ENCODE measurements at regions of chr1 and their contacts with region 1.

Region 1: DNA sequence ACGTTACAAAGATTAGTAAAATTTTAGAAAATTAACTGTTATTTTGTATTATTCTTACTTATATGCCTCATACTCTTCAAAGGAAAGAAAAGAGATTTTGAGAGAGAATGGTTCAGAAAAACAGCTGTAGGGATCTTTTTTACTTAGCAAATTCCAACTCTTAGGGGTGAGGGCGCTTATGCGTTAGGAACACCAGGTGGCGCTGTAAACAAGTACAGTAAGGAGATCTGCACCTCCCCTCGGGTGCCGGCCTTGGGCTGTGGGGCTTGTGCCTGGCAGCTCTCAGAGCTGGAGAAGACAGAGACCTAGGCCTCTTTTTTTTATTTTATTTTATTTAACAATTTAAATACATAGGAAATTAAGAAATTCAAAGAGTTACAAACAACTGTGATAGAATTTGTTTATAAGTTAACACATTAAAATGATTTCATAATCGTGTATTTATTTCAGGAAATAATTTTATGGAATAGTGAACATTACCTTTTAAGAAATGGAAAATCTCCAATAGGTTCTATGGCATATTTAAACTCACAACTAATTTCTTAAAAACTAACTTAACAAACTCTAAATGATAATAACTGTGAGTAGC is 32.6 kb downstream of the UTP25 start:
- DNase-seq: peak; percentile 95
- H3K4me3 ChIP-seq: no peak overlapping the region
- H3K27ac ChIP-seq: no peak overlapping the region
- H3K4me1 ChIP-seq: no peaks in the 10 kb centered on the region
- H3K27me3 ChIP-seq: peaks cover 0 to 13% (median 0%) of the 10 kb centered on the region in 4 donors
- CTCF ChIP-seq: peak; percentile 71 to 89 (median 88)
- EP300 ChIP-seq: no peak
- POLR2A ChIP-seq: no peak

Region 2: DNA sequence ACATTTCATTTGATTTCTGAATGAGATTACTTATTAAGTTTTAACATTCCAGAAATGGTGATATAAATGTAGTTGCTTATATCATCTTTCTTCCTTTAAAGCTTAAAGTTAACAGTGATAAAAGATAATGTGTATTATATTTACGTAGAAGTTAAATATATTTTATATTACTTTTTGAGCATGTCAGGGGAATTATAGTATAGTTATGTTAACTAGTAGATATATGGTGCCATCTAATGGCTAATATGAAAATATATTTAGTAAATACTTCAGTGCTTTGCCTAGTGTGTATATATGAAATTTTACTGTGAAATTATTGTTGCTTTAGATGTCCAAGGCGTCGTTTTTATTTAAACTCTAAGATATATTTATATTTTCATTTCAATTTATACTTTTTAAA is 129.1 kb after region 1 on chr1:
- intact Hi-C with region 1: loop called (anchors 5 kb)
- DNase-seq: no peak
- H3K4me3 ChIP-seq: no peak overlapping the region
- H3K27ac ChIP-seq: no peak overlapping the region
- H3K4me1 ChIP-seq: no peaks in the 10 kb centered on the region
- H3K27me3 ChIP-seq: peaks cover 0 to 24% (median 0%) of the 10 kb centered on the region in 4 donors
- CTCF ChIP-seq: peak in 2 of 3 experiments; percentile 19 to 30
- EP300 ChIP-seq: no peak
- POLR2A ChIP-seq: no peak

Region 3: DNA sequence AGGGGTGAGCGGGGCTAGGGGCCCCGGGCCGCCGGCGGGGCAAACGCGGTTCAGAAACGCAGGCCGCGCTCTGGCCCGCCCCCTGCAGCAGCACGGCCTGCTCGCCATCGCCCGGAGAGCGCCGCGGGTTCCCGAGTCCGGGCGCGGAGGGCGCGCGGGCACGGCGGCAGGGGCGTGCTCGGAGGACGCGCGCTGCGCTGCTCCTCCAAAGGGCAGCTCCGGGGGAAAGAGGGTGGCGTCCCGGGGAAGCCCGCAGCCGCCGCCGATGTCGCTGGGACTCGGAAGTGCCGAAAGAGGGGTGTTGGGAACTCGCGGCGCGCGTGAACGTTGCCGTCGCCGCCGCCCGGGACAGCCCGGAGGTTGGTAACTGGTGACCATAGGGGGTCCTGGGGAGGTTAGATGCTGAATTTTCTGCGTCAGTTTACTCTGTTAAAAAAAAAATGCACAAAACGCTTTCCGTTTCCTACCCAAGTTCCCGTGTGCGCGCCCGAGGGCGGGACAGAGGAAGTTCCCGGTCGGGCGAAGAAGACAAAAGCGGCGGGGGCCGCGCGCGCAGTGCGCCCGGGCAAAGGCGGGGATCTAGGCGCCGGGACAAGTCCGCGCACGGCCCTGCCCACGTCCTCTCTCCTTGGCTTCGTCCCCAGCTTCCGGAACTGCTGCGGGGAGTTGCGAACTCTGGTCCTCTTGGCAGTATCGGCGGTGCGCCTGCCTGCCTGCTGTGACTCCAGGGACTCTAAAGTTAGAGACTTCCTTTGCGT is 468.5 kb after region 1 on chr1 and contains the start of gene HHAT:
- intact Hi-C with region 1: loop called (anchors 10 kb)
- DNase-seq: no peak
- H3K4me3 ChIP-seq: peak within 1 kb of the TSS; percentile 73 to 89 (median 82)
- H3K27ac ChIP-seq: peak within 1 kb of the TSS; percentile 86 to 95 (median 88)
- H3K4me1 ChIP-seq: peaks cover 7 to 22% (median 17%) of the 10 kb centered on the region in 4 donors
- H3K27me3 ChIP-seq: no peaks in the 10 kb centered on the region
- CTCF ChIP-seq: peak in 2 of 3 experiments; percentile 15 to 18
- EP300 ChIP-seq: no peak
- POLR2A ChIP-seq: no peak
- total RNA-seq, gene HHAT: 0.83 to 1.6 (median 1.2) TPM

Measured in esophagus muscularis mucosa (tissue), 4 donors.